CD14-positive monocyte (primary cell): ENCODE measurements at regions of chr22 and their contacts with region 1.

Region 1: GRCh38 chr22:40210818-40211217 is 33.1 kb downstream of the TNRC6B start:
- DNase-seq: peak; percentile 58 to 76 (median 62)
- H3K4me3 ChIP-seq: peak overlapping the region in 1 of 3 experiments; percentile 51
- H3K4me3 Mint-ChIP-seq: peak overlapping the region; percentile 56 to 77
- H3K27ac ChIP-seq: peak overlapping the region; percentile 80 to 89
- H3K27ac Mint-ChIP-seq: peak overlapping the region; percentile 87 to 97 (median 93)
- H3K4me1 ChIP-seq: peaks cover 72 to 75% of the 10 kb centered on the region in 2 donors
- H3K4me1 Mint-ChIP-seq: peaks cover 77% of the 10 kb centered on the region
- H3K27me3 ChIP-seq: no peaks in the 10 kb centered on the region
- H3K27me3 Mint-ChIP-seq: peaks cover 0 to 2% (median 0%) of the 10 kb centered on the region in 3 donors
- CTCF ChIP-seq: no peak

Region 2: DNA sequence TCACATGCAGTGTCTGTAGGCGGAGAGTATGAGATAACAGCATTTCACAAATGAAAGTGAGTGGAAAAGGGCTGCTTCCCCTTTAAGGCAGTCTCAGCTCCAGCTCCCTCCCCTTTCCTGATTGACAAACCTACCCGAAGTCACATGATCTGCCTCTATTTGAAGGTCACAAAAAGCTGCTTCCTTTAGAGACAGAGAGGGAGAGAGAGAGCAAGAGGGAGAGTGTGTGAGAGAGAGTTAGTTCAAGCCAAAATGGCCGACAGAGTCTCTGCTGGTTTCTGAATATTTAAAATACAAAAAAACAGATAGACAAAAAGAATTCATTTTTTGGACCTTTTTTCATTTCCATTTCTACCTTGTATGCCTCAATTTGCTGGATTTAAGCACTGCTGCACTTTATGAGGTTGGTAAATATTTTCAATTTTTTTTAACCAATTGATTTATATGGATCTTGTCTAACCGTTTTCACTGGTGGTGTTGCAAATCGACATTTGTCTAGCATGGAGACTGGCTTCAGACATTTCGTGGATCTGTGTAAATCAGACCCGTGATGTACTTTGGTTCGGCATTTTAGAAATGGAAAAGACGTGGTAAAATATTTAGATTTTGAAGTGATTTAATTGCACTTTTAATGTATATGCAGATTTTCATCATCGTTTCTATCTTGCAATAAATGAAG is 32.9 kb before region 1 on chr22 and contains the start of gene TNRC6B:
- intact Hi-C with region 1: loop called (anchors 5 kb)
- DNase-seq: peak; percentile 92 to 96 (median 96)
- H3K4me3 ChIP-seq: peak within 1 kb of the TSS; percentile 75 to 100 (median 92)
- H3K4me3 Mint-ChIP-seq: peak within 1 kb of the TSS; percentile 80 to 97
- H3K27ac ChIP-seq: peak within 1 kb of the TSS; percentile 39 to 88
- H3K27ac Mint-ChIP-seq: peak within 1 kb of the TSS; percentile 83 to 93 (median 90)
- H3K4me1 ChIP-seq: peaks cover 47 to 56% of the 10 kb centered on the region in 2 donors
- H3K4me1 Mint-ChIP-seq: peaks cover 54% of the 10 kb centered on the region
- H3K27me3 ChIP-seq: no peaks in the 10 kb centered on the region
- H3K27me3 Mint-ChIP-seq: no peaks in the 10 kb centered on the region
- CTCF ChIP-seq: no peak
- polyA plus RNA-seq, gene TNRC6B: 7.2 to 16.5 (median 11.8) TPM

Region 3: DNA sequence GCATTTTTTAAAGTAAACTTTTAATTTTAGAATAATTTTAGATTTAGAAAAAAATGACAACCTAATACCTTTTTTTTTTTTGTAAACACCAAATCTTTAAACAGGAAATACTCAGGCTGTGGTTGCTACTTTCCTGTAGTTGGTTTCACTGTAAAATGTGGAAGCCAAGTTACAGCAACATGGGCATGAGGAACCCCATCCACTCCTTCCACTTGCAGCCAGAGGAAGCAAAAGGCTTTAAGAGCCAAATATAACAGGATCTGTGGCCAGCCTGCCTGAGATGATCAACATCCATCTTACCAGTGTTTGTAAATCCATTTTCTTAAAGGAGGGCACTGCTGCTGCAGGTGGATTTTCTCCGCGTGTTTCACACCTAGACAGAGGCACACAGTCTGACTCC is 33.1 kb after region 1 on chr22:
- intact Hi-C with region 1: no loop called
- DNase-seq: peak; percentile 40 to 41 (median 40)
- H3K4me3 ChIP-seq: no peak overlapping the region
- H3K4me3 Mint-ChIP-seq: peak overlapping the region in 1 of 2 donors; percentile 48
- H3K27ac ChIP-seq: peak overlapping the region in 1 of 2 donors; percentile 53
- H3K27ac Mint-ChIP-seq: peak overlapping the region in 4 of 7 donors; percentile 46 to 79 (median 73)
- H3K4me1 ChIP-seq: peaks cover 14 to 26% of the 10 kb centered on the region in 2 donors
- H3K4me1 Mint-ChIP-seq: peaks cover 36% of the 10 kb centered on the region
- H3K27me3 ChIP-seq: no peaks in the 10 kb centered on the region
- H3K27me3 Mint-ChIP-seq: no peaks in the 10 kb centered on the region
- CTCF ChIP-seq: no peak

Region 4: DNA sequence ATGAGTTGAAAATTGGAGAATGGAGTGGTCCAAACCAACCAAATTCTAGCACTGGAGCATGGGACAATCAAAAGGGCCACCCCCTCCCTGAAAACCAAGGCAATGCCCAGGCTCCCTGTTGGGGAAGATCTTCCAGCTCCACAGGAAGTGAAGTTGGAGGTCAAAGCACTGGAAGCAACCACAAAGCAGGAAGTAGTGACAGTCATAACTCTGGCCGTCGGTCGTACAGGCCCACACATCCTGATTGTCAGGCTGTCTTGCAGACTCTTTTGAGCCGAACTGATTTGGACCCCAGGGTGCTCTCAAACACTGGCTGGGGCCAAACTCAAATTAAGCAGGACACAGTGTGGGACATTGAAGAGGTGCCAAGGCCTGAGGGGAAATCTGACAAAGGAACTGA is 55.0 kb after region 1 on chr22:
- intact Hi-C with region 1: no loop called
- DNase-seq: peak; percentile 30 to 61 (median 53)
- H3K4me3 ChIP-seq: peak overlapping the region in 1 of 3 experiments; percentile 9
- H3K4me3 Mint-ChIP-seq: peak overlapping the region; percentile 34 to 53
- H3K27ac ChIP-seq: peak overlapping the region in 1 of 2 donors; percentile 64
- H3K27ac Mint-ChIP-seq: peak overlapping the region; percentile 9 to 94 (median 76)
- H3K4me1 ChIP-seq: peaks cover 11 to 19% of the 10 kb centered on the region in 2 donors
- H3K4me1 Mint-ChIP-seq: peaks cover 18% of the 10 kb centered on the region
- H3K27me3 ChIP-seq: no peaks in the 10 kb centered on the region
- H3K27me3 Mint-ChIP-seq: no peaks in the 10 kb centered on the region
- CTCF ChIP-seq: no peak